Sigmoid colon (tissue), 7 donors: ENCODE measurements at regions of chr16 and their contacts with region 1.

Region 1: GRCh38 chr16:25111403-25112166 is at the start of gene LCMT1:
- DNase-seq: peak; percentile 97
- H3K4me3 ChIP-seq: peak within 1 kb of the TSS; percentile 80 to 96 (median 92)
- H3K27ac ChIP-seq: peak within 1 kb of the TSS; percentile 85 to 88 (median 88)
- H3K4me1 ChIP-seq: peaks cover 0 to 51% (median 41%) of the 10 kb centered on the region in 4 donors
- H3K27me3 ChIP-seq: no peaks in the 10 kb centered on the region
- CTCF ChIP-seq: no peak
- EP300 ChIP-seq: no peak
- POLR2A ChIP-seq: peak; percentile 54 to 62
- total RNA-seq, gene LCMT1: 27.0 to 50.0 (median 36.2) TPM

Region 2: DNA sequence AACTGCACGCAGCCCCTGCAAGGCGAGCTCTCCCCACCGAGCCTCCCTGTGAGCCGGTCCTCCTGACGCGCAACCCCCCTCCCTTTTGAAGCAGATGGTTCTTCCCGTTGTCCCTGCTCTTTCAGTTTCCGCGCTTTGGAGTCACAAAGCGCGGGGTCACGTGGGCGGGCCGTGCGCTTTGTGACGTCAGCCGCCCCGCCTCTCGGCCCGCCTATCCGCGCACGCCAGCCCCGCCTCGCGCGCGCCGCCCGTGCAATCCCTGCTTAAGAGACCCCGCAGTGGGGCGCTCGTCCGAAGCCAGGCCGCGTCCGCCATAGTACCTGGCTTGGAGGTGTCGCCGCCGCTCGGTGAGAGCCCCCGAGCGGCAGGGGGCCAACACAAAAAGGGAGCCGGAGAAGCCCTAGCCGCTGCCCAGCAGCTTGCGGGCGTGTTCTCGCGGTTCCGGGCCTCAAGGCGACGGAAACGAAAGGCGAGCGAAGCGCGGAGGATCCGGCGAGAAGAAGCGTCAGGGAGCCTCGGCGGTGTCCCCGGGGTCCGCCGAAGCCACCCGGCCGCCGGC is 572.2 kb before region 1 on chr16 and contains the start of gene RBBP6:
- intact Hi-C with region 1: loop called (anchors 5 kb)
- DNase-seq: peak; percentile 98
- H3K4me3 ChIP-seq: peak within 1 kb of the TSS; percentile 83 to 99 (median 94)
- H3K27ac ChIP-seq: peak within 1 kb of the TSS; percentile 99 to 100 (median 100)
- H3K4me1 ChIP-seq: peaks cover 0 to 32% (median 30%) of the 10 kb centered on the region in 4 donors
- H3K27me3 ChIP-seq: no peaks in the 10 kb centered on the region
- CTCF ChIP-seq: peak in 1 of 4 experiments; percentile 26
- EP300 ChIP-seq: peak in 2 of 4 donors; percentile 81 to 82
- POLR2A ChIP-seq: peak; percentile 98 to 99
- total RNA-seq, gene RBBP6: 48.7 to 105 (median 69.0) TPM

Region 3: DNA sequence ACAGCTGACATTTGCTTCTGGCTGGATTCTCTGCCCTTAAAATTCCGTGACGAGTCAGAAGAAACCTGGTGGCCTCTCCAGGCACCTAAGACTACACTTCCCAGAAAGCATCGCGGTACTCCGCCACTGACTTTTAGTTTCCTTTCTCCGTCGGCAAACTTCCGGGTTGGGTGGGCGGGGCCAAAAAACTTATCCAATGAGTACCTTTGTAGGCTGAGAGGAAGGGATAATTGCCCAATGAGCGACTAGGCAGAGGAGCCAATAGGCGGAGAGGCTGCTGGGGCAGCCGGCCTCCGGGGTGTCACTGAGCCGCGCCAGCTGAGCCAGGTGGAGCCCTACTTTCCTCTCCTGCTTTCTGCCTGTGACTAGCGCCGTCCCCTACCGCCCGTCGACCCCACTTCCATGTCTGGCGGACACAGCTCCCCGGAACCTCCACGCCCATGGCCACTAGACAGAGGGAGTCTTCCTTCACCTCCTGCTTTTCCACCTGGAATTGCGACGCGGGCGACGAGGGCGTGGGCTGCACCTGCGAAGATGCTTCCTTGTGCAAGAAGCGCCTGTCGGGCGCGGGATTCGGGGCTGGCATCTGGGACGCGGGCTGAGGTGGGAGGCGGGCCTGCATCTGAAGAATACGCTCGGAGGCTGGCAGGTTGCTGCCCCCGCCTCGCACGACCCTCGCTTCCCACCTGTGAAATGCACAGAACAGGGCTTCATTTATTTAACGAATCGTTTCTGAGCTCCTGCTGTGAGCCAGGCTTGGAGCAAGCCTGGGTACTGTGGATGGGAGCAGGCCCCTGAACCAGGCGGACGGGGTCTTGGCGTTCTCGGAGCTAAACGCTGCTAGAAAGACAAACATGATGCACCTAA is 79.9 kb before region 1 on chr16:
- intact Hi-C with region 1: loop called (anchors 5 kb)
- DNase-seq: peak; percentile 96
- H3K4me3 ChIP-seq: peak overlapping the region; percentile 76 to 93 (median 86)
- H3K27ac ChIP-seq: peak overlapping the region; percentile 72 to 78 (median 74)
- H3K4me1 ChIP-seq: peaks cover 0 to 20% (median 14%) of the 10 kb centered on the region in 4 donors
- H3K27me3 ChIP-seq: no peaks in the 10 kb centered on the region
- CTCF ChIP-seq: no peak
- EP300 ChIP-seq: no peak
- POLR2A ChIP-seq: peak; percentile 42 to 48

Region 4: DNA sequence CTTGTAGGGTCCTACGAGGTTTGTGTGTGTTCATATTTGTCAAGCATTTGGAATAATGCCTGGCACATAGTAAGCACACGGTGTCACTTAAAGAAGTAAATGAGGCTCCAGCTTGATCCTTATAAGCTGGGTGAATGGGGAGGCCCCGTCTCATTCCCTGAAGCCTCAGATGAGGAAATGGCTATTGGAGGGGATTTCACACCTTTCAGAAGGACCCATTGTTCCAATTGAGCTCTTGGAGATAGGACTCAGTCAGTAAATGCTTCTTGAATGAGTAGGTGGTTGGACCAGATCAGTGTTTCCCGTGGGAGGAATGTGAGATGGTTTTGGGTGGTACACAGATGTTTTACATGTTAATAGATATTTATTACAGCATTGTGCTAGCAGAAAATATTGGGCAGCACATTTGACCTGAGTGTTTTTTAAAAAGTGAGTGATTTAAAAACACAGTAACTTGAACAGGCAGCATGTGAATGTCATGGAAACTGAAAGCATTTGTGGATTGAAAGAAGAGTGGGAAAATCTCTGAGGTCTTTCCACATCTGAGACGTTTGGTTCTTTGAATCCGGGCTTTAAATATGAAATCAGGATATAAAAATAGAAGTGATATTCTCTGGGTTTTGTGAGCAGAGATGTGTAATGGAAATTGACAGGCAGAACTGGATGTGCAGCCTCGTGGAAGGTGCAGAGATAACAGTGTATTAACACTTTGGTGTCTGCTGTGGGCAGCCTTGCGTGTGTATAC is 60.0 kb before region 1 on chr16:
- intact Hi-C with region 1: loop called (anchors 2 kb)
- DNase-seq: no peak
- H3K4me3 ChIP-seq: peak overlapping the region in 2 of 4 donors; percentile 7 to 15
- H3K27ac ChIP-seq: peak overlapping the region; percentile 23 to 91 (median 71)
- H3K4me1 ChIP-seq: peaks cover 0 to 31% (median 22%) of the 10 kb centered on the region in 4 donors
- H3K27me3 ChIP-seq: no peaks in the 10 kb centered on the region
- CTCF ChIP-seq: no peak
- EP300 ChIP-seq: no peak
- POLR2A ChIP-seq: no peak

Region 5: GRCh38 chr16:25066747-25067631 is 44.6 kb before region 1 on chr16:
- intact Hi-C with region 1: loop called (anchors 2 kb)
- DNase-seq: peak; percentile 90
- H3K4me3 ChIP-seq: peak overlapping the region; percentile 71 to 87 (median 82)
- H3K27ac ChIP-seq: peak overlapping the region; percentile 94 to 96 (median 94)
- H3K4me1 ChIP-seq: peaks cover 0 to 16% (median 13%) of the 10 kb centered on the region in 4 donors
- H3K27me3 ChIP-seq: no peaks in the 10 kb centered on the region
- CTCF ChIP-seq: no peak
- EP300 ChIP-seq: no peak
- POLR2A ChIP-seq: peak; percentile 51 to 69

Region 6: DNA sequence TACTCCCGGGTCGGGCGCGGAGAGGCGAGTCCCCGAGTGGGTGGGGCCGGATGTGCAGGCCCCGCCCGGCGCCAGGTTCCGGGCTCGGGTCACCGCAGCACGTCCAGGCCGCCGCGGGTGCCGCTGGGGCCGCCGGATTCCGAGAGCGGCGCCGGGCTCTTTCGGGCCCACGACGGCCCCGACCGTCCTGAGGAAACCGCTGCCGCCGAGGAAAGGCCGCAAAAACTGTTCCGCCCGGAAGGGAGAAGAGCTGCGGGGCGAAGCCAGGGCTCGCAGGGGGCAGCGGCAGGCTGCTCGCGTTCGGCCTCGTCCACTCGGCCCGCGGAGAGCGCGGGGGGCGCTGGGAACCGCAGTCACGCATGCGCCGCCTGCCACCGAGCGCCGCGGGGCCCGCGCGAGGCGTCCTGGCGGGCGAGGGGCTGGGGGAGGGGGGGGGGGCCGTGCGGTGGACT is 145.9 kb after region 1 on chr16 and contains the start of gene ZKSCAN2:
- intact Hi-C with region 1: loop called (anchors 2 kb)
- DNase-seq: peak; percentile 95
- H3K4me3 ChIP-seq: peak within 1 kb of the TSS; percentile 80 to 91 (median 84)
- H3K27ac ChIP-seq: peak within 1 kb of the TSS; percentile 95 to 99 (median 99)
- H3K4me1 ChIP-seq: peaks cover 0 to 42% (median 29%) of the 10 kb centered on the region in 4 donors
- H3K27me3 ChIP-seq: no peaks in the 10 kb centered on the region
- CTCF ChIP-seq: no peak
- EP300 ChIP-seq: no peak
- POLR2A ChIP-seq: peak in 1 of 2 donors; percentile 19
- total RNA-seq, gene ZKSCAN2: 3.9 to 5.5 (median 4.4) TPM